Activated CD4-positive, alpha-beta T cell treated with anti-CD3 and anti-CD28 coated beads for 36 hours (primary cell): ENCODE measurements at regions of chr12 and their contacts with region 1.

Region 1: GRCh38 chr12:104108755-104109445 is 29.1 kb downstream of the NFYB start:
- DNase-seq: peak; percentile 94
- ATAC-seq: peak; percentile 99
- H3K4me3 Mint-ChIP-seq: no peak overlapping the region
- H3K27ac Mint-ChIP-seq: peak overlapping the region; percentile 44
- H3K4me1 Mint-ChIP-seq: peaks cover 7% of the 10 kb centered on the region
- H3K27me3 Mint-ChIP-seq: no peaks in the 10 kb centered on the region

Region 2: DNA sequence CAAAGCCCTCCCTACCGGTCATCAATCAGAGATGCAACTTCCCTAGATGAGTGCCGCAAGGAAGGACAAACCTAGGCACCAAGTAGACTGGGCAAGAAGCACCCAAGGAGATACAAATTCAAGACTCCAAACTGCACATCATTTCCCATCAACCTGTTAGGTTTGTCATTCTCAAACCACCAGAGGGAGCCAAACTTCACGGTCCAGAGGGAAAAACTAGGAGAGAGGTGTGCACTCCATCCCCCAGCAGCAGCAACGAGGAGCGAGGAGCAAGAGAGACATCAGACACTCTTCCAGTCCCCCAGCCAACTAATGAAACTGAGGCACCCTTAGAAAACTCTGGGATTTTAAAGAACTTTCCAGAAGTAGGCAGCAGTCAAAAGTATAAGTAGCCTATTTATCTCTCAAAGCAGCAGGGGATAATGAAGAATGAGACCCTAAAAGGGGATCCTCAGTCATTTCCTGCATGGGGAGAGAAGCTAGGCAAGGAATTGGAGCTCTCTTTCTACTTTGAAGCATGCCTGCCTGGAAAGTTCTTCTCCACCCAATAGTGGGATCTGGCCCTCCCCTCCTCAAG is 230.9 kb before region 1 on chr12:
- CTCF ChIA-PET with region 1: interaction called, 24 read pairs
- POLR2A ChIA-PET with region 1: no interaction called
- intact Hi-C with region 1: loop called (anchors 1 kb)
- DNase-seq: peak; percentile 75
- ATAC-seq: peak; percentile 85
- H3K4me3 Mint-ChIP-seq: no peak overlapping the region
- H3K27ac Mint-ChIP-seq: no peak overlapping the region
- H3K4me1 Mint-ChIP-seq: peaks cover 21% of the 10 kb centered on the region
- H3K27me3 Mint-ChIP-seq: no peaks in the 10 kb centered on the region

Region 3: DNA sequence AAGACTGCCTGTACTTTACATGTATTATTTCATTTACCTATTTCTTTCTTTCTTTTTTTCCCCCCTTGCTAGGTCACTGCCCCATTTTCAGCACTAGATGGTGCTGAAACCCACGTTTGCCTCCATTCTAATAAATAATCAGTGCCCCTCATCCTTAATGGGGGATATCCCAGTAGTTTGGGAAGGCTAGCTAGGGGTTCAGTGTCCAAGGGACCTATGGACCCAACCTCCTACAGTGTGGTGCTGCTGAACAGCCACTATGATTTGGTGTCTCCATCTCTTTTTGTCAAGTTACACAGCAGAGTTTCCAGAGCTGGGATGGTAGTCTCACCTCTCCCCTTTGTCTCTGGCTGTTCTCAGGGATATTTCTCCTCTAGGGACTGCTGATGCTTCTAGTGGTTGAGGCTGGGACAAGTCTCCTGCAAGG is 51.1 kb before region 1 on chr12:
- CTCF ChIA-PET with region 1: interaction called, 66 read pairs
- POLR2A ChIA-PET with region 1: interaction called, 4 read pairs
- intact Hi-C with region 1: loop called (anchors 1 kb)
- DNase-seq: no peak
- ATAC-seq: no peak
- H3K4me3 Mint-ChIP-seq: no peak overlapping the region
- H3K27ac Mint-ChIP-seq: no peak overlapping the region
- H3K4me1 Mint-ChIP-seq: no peaks in the 10 kb centered on the region
- H3K27me3 Mint-ChIP-seq: peaks cover 17% of the 10 kb centered on the region

Region 4: GRCh38 chr12:104083769-104084475 is 25.0 kb before region 1 on chr12:
- CTCF ChIA-PET with region 1: interaction called, 10 read pairs
- POLR2A ChIA-PET with region 1: no interaction called
- intact Hi-C with region 1: no loop called
- DNase-seq: peak; percentile 74
- ATAC-seq: peak; percentile 94
- H3K4me3 Mint-ChIP-seq: no peak overlapping the region
- H3K27ac Mint-ChIP-seq: peak overlapping the region; percentile 14
- H3K4me1 Mint-ChIP-seq: peaks cover 17% of the 10 kb centered on the region
- H3K27me3 Mint-ChIP-seq: no peaks in the 10 kb centered on the region

Region 5: GRCh38 chr12:104121001-104121400 is 12.1 kb after region 1 on chr12:
- CTCF ChIA-PET with region 1: interaction called, 30 read pairs
- POLR2A ChIA-PET with region 1: no interaction called
- intact Hi-C with region 1: no loop called
- DNase-seq: no peak
- ATAC-seq: no peak
- H3K4me3 Mint-ChIP-seq: no peak overlapping the region
- H3K27ac Mint-ChIP-seq: no peak overlapping the region
- H3K4me1 Mint-ChIP-seq: peaks cover 4% of the 10 kb centered on the region
- H3K27me3 Mint-ChIP-seq: no peaks in the 10 kb centered on the region

Region 6: DNA sequence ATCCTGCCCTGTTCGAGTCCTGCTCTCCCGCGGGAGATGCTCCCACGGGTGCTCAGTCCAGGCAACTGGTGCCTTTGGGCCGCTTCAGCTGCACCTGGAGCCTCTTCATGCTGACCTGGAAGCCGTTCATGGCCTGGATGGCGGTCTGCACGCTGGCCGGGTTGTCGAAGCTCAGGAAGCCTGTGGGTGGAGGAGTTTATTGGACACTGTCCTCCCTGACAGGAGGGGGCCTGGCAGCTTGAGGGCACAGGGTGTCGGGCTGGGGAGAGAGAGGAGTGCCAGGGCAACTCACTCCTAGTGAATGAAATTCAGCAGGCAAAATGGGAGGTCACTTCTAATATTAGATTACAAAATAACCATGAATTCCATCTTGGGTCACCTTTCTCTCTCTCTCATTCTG is 38.4 kb after region 1 on chr12:
- CTCF ChIA-PET with region 1: interaction called, 10 read pairs
- POLR2A ChIA-PET with region 1: no interaction called
- intact Hi-C with region 1: no loop called
- DNase-seq: no peak
- ATAC-seq: no peak
- H3K4me3 Mint-ChIP-seq: no peak overlapping the region
- H3K27ac Mint-ChIP-seq: no peak overlapping the region
- H3K4me1 Mint-ChIP-seq: no peaks in the 10 kb centered on the region
- H3K27me3 Mint-ChIP-seq: peaks cover 5% of the 10 kb centered on the region